Natural killer cell (primary cell): ENCODE measurements at regions of chr1 and their contacts with region 1.

Region 1: DNA sequence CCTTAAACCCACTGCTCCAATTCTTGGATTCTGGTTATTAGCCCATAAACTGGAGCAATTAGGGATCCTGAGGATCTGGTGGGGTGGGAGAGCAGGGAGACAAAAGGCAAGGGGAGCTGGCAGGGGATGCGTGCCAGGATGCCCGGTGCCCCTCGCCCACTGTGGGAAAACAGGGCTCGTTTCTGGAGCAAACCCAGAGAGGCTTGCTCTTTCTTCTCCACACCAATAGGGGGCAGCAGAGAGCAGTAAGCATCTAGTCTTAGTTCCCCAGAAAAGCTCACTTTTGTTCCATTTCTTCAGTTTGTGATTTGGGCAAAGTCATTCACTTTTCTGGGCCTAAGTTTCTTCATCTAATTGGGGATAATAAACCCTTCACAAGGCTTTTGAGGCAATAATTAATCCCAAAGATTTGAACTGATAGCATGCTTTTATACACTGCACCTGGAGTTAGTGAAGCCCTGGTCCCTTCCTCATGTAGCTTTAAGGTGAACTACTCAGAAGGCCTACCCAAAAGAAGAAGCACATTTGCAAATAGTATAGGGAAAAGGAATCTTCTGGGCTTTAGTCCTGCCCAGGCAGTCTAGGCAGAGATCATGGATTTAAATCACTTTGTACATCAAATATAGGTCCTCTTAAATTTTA is 160.6 kb upstream of the USP24 start:
- DNase-seq: peak in 1 of 2 donors; percentile 64
- ATAC-seq: peak; percentile 44 to 69 (median 62)
- H3K4me3 ChIP-seq: no peak overlapping the region
- H3K4me3 Mint-ChIP-seq: no peak overlapping the region
- H3K27ac ChIP-seq: no peak overlapping the region
- H3K27ac Mint-ChIP-seq: no peak overlapping the region
- H3K4me1 ChIP-seq: no peaks in the 10 kb centered on the region
- H3K4me1 Mint-ChIP-seq: peaks cover 6 to 11% of the 10 kb centered on the region in 2 donors
- H3K27me3 ChIP-seq: no peaks in the 10 kb centered on the region
- H3K27me3 Mint-ChIP-seq: no peaks in the 10 kb centered on the region
- CTCF ChIP-seq: peak; percentile 85

Region 2: GRCh38 chr1:55893155-55893554 is 517.4 kb after region 1 on chr1:
- intact Hi-C with region 1: loop called (anchors 10 kb)
- DNase-seq: no peak
- ATAC-seq: no peak
- H3K4me3 ChIP-seq: no peak overlapping the region
- H3K4me3 Mint-ChIP-seq: no peak overlapping the region
- H3K27ac ChIP-seq: no peak overlapping the region
- H3K27ac Mint-ChIP-seq: no peak overlapping the region
- H3K4me1 ChIP-seq: no peaks in the 10 kb centered on the region
- H3K4me1 Mint-ChIP-seq: no peaks in the 10 kb centered on the region
- H3K27me3 ChIP-seq: no peaks in the 10 kb centered on the region
- H3K27me3 Mint-ChIP-seq: peaks cover 0 to 5% of the 10 kb centered on the region in 2 donors
- CTCF ChIP-seq: no peak

Region 3: DNA sequence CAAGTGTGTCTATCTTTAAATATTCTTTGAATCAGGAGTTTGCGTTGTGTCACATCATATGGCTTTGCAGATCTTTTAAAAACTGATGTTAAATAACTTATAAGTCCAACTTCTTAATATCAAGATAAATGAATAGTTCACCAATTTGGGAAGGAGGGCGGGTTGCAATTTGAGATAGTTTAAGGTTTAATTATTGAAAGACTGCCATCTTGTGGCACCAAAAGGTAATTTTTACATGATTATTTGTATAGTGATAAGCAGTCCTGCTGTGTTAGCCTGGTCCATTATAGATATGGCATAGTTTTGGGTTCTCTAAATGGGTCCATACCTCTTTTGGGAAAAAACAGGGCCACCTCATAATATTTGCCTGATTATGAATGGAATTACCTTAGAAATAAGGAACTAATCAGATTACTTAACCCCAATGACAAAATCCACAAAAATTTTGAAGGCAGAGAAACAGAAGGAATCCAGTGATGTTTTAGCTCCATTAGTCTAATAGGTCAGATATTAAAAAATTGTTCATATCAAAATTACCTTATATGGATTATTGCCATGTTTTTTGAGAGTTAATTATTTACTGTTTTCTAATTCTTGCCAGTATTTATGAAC is 1333.6 kb after region 1 on chr1:
- intact Hi-C with region 1: loop called (anchors 5 kb)
- DNase-seq: peak in 1 of 2 donors; percentile 48
- ATAC-seq: peak in 1 of 3 donors; percentile 50
- H3K4me3 ChIP-seq: no peak overlapping the region
- H3K4me3 Mint-ChIP-seq: no peak overlapping the region
- H3K27ac ChIP-seq: no peak overlapping the region
- H3K27ac Mint-ChIP-seq: no peak overlapping the region
- H3K4me1 ChIP-seq: no peaks in the 10 kb centered on the region
- H3K4me1 Mint-ChIP-seq: no peaks in the 10 kb centered on the region
- H3K27me3 ChIP-seq: peaks cover 3% of the 10 kb centered on the region
- H3K27me3 Mint-ChIP-seq: peaks cover 3 to 33% of the 10 kb centered on the region in 2 donors
- CTCF ChIP-seq: peak; percentile 64

Region 4: GRCh38 chr1:56821140-56821797 is 1445.5 kb after region 1 on chr1:
- intact Hi-C with region 1: loop called (anchors 10 kb)
- DNase-seq: peak; percentile 56 to 63
- ATAC-seq: peak; percentile 63 to 93 (median 74)
- H3K4me3 ChIP-seq: no peak overlapping the region
- H3K4me3 Mint-ChIP-seq: no peak overlapping the region
- H3K27ac ChIP-seq: no peak overlapping the region
- H3K27ac Mint-ChIP-seq: no peak overlapping the region
- H3K4me1 ChIP-seq: no peaks in the 10 kb centered on the region
- H3K4me1 Mint-ChIP-seq: no peaks in the 10 kb centered on the region
- H3K27me3 ChIP-seq: no peaks in the 10 kb centered on the region
- H3K27me3 Mint-ChIP-seq: peaks cover 5 to 38% of the 10 kb centered on the region in 2 donors
- CTCF ChIP-seq: peak; percentile 87